Panc1 (cell line): ENCODE measurements at regions of chr16 and their contacts with region 1.

Region 1: GRCh38 chr16:56990407-56991286 is 1.3 kb downstream of the NLRC5 start:
- DNase-seq: no peak
- ATAC-seq: no peak
- H3K4me3 ChIP-seq: no peak overlapping the region
- H3K27ac ChIP-seq: no peak overlapping the region
- H3K4me1 ChIP-seq: peaks cover 3% of the 10 kb centered on the region; the same call in 1 of the 2 replicates
- H3K27me3 ChIP-seq: no peaks in the 10 kb centered on the region
- CTCF ChIP-seq: no peak

Region 2: DNA sequence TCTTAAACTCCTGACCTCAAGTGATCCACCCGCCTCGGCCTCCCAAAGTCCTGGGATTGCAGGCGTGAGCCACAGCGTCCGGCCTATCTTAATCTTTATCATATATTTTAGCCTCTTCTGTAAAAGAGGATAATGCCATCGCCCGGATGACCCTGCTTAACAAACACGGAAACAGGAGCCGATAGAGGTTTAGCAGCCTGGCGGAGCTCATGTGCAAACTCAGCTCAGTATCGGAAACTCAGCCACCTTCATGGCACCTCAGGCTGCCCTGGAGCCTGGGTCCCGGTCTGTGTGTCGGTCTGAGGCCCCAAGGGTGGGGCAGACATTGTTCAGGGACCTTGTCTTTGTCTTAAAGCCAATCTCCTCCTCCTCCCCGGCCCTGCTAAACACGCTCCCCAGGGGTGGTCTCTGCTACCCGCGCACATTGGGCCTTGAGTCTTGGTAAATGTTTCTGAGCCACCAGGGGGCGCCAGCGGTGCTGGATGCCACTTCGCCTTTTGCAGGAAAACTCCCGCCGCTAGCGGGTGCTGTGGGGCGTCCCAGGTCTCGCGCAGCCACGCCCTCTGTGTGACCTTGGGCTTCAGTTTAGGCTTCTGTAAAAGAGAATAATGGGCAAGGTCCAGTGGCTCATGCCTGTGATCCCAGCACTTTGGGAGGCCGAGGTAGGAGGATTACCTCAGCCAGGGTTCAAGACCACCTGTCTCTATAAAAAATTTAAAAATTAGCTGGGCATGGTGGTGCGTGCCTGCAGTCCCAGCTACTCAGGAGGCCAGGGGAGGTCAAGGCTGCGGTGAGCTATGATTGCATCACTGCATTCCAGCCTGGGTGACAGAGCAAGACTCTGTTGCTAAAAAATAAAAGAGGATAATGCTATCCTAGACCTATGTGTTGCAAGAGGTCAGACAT is 26.2 kb before region 1 on chr16:
- CTCF ChIA-PET with region 1: no interaction called
- POLR2A ChIA-PET with region 1: interaction called, 14 read pairs
- in situ Hi-C with region 1: no loop called
- intact Hi-C with region 1: no loop called
- DNase-seq: no peak
- ATAC-seq: peak; percentile 81
- H3K4me3 ChIP-seq: no peak overlapping the region
- H3K27ac ChIP-seq: no peak overlapping the region
- H3K4me1 ChIP-seq: no peaks in the 10 kb centered on the region
- H3K27me3 ChIP-seq: no peaks in the 10 kb centered on the region
- CTCF ChIP-seq: peak; percentile 95